ENCODE measurements at regions of chr17 and their contacts with region 1.

Region 1: GRCh38 chr17:57243171-57243948 is 13.0 kb upstream of the MSI2 start:
- DNase-seq: peak; percentile 66
- H3K4me3 ChIP-seq: no peak overlapping the region
- H3K27ac ChIP-seq: no peak overlapping the region
- H3K4me1 ChIP-seq: no peaks in the 10 kb centered on the region
- H3K27me3 ChIP-seq: peaks cover 13 to 16% of the 10 kb centered on the region in 2 experiments
- CTCF ChIP-seq: peak; percentile 100
- POLR2A ChIP-seq: no peak

Region 2: DNA sequence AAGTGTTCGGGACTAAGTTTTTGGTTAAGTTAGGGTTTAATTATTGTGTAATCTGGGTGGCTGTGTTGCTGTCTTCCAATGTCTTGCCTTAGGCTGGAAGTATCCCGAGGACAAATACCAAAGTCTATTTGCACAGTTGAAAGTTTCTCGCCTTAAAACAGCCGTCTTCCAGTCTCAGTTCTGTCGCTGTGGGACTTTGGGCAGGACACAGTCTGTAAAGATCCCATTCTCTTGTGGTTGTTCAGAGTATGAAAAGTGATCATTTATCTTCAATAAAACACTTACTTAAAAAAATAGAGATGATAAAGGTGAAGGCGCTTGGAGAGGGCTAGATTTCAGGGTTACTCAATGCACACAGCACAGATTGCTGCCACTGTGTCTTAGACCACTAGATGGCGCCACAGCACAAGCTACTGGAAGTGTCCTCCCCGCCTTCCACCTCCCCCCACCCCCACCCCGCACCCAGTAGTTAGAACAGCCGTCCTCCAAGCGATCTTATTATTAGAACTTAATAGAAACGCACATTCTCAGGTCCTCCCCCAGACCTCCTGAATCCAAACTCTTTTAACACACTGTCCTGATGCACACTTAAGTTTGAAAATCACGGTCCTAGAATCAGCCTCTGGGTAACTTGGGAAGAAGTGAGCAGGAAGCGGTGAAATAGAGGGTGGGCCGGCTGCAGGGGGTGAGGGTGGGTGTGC is 112.4 kb before region 1 on chr17:
- CTCF ChIA-PET with region 1: interaction called, 46 read pairs
- POLR2A ChIA-PET with region 1: no interaction called
- dilution Hi-C with region 1: no loop called
- intact Hi-C with region 1: loop called (anchors 2 kb)
- DNase-seq: peak; percentile 57
- H3K4me3 ChIP-seq: no peak overlapping the region
- H3K27ac ChIP-seq: no peak overlapping the region
- H3K4me1 ChIP-seq: no peaks in the 10 kb centered on the region
- H3K27me3 ChIP-seq: no peaks in the 10 kb centered on the region
- CTCF ChIP-seq: peak; percentile 46 to 85
- POLR2A ChIP-seq: no peak

Region 3: GRCh38 chr17:57226793-57227192 is 16.6 kb before region 1 on chr17:
- CTCF ChIA-PET with region 1: interaction called, 23 read pairs
- POLR2A ChIA-PET with region 1: no interaction called
- dilution Hi-C with region 1: no loop called
- intact Hi-C with region 1: no loop called
- DNase-seq: peak; percentile 50
- H3K4me3 ChIP-seq: no peak overlapping the region
- H3K27ac ChIP-seq: no peak overlapping the region
- H3K4me1 ChIP-seq: peaks cover 12% of the 10 kb centered on the region
- H3K27me3 ChIP-seq: no peaks in the 10 kb centered on the region
- CTCF ChIP-seq: no peak
- POLR2A ChIP-seq: no peak

Region 4: GRCh38 chr17:57408071-57408811 is 164.9 kb after region 1 on chr17:
- CTCF ChIA-PET with region 1: interaction called, 74 read pairs
- POLR2A ChIA-PET with region 1: no interaction called
- dilution Hi-C with region 1: no loop called
- intact Hi-C with region 1: loop called (anchors 1 kb)
- DNase-seq: no peak
- H3K4me3 ChIP-seq: no peak overlapping the region
- H3K27ac ChIP-seq: no peak overlapping the region
- H3K4me1 ChIP-seq: no peaks in the 10 kb centered on the region
- H3K27me3 ChIP-seq: no peaks in the 10 kb centered on the region
- CTCF ChIP-seq: no peak
- POLR2A ChIP-seq: no peak

Region 5: GRCh38 chr17:57527221-57528057 is 284.1 kb after region 1 on chr17:
- CTCF ChIA-PET with region 1: interaction called, 15 read pairs
- POLR2A ChIA-PET with region 1: no interaction called
- dilution Hi-C with region 1: no loop called
- intact Hi-C with region 1: no loop called
- DNase-seq: no peak
- H3K4me3 ChIP-seq: no peak overlapping the region
- H3K27ac ChIP-seq: no peak overlapping the region
- H3K4me1 ChIP-seq: no peaks in the 10 kb centered on the region
- H3K27me3 ChIP-seq: no peaks in the 10 kb centered on the region
- CTCF ChIP-seq: no peak
- POLR2A ChIP-seq: no peak

Region 6: DNA sequence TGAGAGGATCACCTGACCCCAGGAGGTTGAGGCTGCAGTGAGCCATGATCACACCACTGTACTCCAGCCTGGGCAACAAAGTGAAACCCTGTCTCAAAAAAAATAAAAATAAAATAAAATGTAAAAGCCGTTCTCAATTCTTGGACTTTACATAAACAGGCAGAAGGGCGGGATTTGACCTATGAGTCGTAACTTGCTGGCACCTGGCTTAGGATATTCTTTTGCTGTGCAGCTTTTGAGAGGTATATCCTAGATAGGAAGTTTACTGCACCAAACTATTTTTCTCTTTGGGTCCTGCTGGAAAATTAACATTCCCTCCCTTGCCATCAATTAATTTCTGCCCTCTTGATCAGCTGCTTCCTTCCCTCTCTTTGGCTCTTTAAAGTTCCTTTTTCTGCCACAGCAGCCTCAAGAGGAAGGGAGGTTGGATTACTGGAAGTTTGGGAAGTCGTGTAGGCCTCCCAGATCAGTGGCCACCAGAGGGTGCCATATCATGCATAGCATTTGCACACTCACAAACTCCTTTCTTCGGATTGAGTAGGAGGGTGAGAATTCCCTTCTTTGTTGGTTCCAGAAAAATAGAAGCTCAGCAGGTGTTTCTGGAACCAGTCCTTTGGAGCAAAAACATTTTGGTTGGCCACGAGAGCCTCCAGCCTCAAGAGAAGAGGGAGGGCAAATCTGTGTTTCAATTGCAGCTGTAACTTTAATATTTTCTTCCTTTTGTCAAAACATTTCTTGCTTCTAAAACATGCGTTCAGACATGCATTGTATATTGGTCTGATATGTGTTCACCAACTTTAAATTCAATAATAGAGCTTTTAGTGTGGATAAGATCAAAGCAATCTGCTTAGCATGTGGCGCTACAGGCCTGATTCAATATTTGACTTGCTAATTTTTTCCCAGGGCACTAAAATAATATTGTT is 354.4 kb after region 1 on chr17:
- CTCF ChIA-PET with region 1: interaction called, 31 read pairs
- POLR2A ChIA-PET with region 1: no interaction called
- dilution Hi-C with region 1: no loop called
- intact Hi-C with region 1: loop called (anchors 2 kb)
- DNase-seq: peak; percentile 67
- H3K4me3 ChIP-seq: no peak overlapping the region
- H3K27ac ChIP-seq: no peak overlapping the region
- H3K4me1 ChIP-seq: no peaks in the 10 kb centered on the region
- H3K27me3 ChIP-seq: peaks cover 7 to 9% of the 10 kb centered on the region in 2 experiments
- CTCF ChIP-seq: peak; percentile 78 to 79
- POLR2A ChIP-seq: no peak

Region 7: DNA sequence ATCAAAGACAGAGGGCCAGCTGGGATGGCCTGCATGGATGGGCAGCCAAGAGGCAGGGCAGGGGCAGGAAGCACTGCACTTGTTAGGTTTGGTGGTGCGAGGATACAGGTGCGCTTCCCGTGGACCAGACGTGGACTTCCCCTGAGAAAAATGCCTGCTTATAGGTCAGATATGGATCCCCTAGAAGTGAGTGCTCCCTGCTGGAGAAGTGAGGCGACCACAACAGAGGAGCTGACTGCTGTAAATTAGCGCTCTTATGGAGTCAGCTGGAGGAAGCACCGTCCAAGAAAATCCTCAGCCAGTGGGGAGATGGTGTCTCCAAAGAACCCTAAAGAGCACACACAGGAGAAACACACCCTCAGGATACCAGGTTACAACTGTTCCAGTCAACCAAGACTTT is 529.4 kb after region 1 on chr17:
- CTCF ChIA-PET with region 1: interaction called, 13 read pairs
- POLR2A ChIA-PET with region 1: no interaction called
- dilution Hi-C with region 1: no loop called
- intact Hi-C with region 1: no loop called
- DNase-seq: no peak
- H3K4me3 ChIP-seq: no peak overlapping the region
- H3K27ac ChIP-seq: no peak overlapping the region
- H3K4me1 ChIP-seq: peaks cover 19% of the 10 kb centered on the region
- H3K27me3 ChIP-seq: peaks cover 13 to 17% of the 10 kb centered on the region in 2 experiments
- CTCF ChIP-seq: no peak
- POLR2A ChIP-seq: no peak